ENCODE measurements at regions of chr7 and their contacts with region 1.

Region 1: GRCh38 chr7:40329601-40330153 is 194.9 kb downstream of the SUGCT start:
- DNase-seq: peak; percentile 14
- H3K4me3 Mint-ChIP-seq: no peak overlapping the region
- H3K27ac Mint-ChIP-seq: no peak overlapping the region
- H3K4me1 Mint-ChIP-seq: no peaks in the 10 kb centered on the region
- H3K27me3 Mint-ChIP-seq: no peaks in the 10 kb centered on the region
- CTCF ChIP-seq: peak; percentile 85

Region 2: GRCh38 chr7:40232242-40232893 is 97.3 kb before region 1 on chr7:
- CTCF ChIA-PET with region 1: interaction called, 5 read pairs
- intact Hi-C with region 1: loop called (anchors 5 kb)
- DNase-seq: peak; percentile 57
- H3K4me3 Mint-ChIP-seq: no peak overlapping the region
- H3K27ac Mint-ChIP-seq: no peak overlapping the region
- H3K4me1 Mint-ChIP-seq: peaks cover 9% of the 10 kb centered on the region
- H3K27me3 Mint-ChIP-seq: no peaks in the 10 kb centered on the region
- CTCF ChIP-seq: peak; percentile 62

Region 3: GRCh38 chr7:40393660-40394059 is 64.0 kb after region 1 on chr7:
- CTCF ChIA-PET with region 1: no interaction called
- intact Hi-C with region 1: no loop called
- DNase-seq: no peak
- H3K4me3 Mint-ChIP-seq: no peak overlapping the region
- H3K27ac Mint-ChIP-seq: no peak overlapping the region
- H3K4me1 Mint-ChIP-seq: no peaks in the 10 kb centered on the region
- H3K27me3 Mint-ChIP-seq: no peaks in the 10 kb centered on the region
- CTCF ChIP-seq: no peak

Region 4: DNA sequence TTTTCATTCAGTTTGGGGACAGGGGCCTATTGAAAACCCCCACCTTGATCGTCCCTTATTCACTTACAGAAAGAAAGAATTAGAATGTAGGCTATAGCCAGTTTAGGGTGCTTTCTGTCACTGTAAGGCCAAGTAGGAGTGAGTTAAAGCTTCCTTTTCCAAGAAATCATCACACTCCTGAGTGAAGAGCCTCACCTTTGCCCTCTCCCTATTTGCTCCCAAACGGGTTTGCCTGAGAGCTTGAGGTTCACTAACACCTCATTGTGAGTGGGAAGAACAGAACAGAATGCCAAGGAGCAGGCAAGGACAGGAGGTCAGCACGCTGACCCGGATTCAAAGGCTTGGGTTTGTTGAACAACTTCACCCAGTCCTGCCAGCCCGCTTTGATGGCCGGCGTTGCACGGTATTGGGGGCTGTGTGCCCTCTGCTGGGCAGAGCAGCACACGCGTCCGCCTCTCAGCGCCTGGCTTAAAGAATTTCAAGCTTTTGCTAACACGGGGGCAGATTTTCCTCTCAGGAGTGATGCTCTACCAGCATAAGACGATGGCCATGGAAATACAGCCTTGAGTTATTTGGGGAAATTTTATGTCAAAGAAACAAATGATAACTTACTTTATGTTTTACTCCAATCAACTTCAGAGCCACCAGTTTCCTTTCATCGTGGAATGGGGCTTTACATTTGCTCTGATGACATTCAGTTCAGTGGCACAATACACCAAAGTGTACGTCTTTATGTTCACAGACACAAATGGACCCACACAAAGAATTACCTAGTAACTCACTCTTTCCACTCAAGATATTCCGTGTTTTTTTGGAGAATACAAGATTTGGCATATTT is 275.1 kb after region 1 on chr7:
- CTCF ChIA-PET with region 1: interaction called, 6 read pairs
- intact Hi-C with region 1: loop called (anchors 1 kb)
- DNase-seq: peak; percentile 72
- H3K4me3 Mint-ChIP-seq: no peak overlapping the region
- H3K27ac Mint-ChIP-seq: no peak overlapping the region
- H3K4me1 Mint-ChIP-seq: peaks cover 10% of the 10 kb centered on the region
- H3K27me3 Mint-ChIP-seq: no peaks in the 10 kb centered on the region
- CTCF ChIP-seq: peak; percentile 92

Region 5: DNA sequence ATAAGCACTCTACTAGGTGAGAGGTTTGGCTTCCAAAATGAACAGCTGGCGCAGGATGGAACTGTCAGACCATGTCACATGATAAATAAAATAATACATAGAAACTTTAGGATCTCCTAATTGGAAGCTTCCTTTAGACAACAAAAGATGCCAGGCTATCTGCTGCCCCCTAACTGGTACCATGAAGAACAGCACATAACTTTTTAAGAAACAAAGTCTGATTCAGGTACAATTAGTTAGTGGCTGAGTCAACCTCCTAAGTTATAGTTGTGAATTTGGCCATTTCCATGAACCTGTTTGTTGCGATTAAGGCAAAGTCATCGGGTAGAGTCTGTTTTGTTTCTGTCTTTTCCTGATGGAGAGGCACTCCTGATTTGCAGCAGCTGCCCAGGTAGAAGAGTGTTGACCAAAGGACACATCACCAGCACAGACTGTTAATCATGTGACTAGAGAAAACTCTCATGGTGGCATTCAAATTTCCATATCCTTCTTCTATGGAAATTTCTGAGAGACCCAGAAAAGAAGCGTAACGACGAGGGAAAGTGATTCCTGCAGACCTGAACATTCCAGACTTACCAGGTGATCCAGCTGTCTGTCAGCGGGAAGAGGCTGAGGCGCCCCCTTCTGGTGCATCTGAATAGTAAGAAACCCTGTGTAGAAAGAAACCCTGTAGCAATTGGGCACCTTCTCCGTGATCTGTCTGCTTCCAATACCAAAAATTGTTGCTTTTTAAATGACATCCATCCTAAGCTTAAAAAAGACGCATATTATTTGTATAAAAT is 1381.8 kb after region 1 on chr7:
- CTCF ChIA-PET with region 1: interaction called, 3 read pairs
- intact Hi-C with region 1: loop called (anchors 1 kb)
- DNase-seq: peak; percentile 70
- H3K4me3 Mint-ChIP-seq: no peak overlapping the region
- H3K27ac Mint-ChIP-seq: no peak overlapping the region
- H3K4me1 Mint-ChIP-seq: peaks cover 22% of the 10 kb centered on the region
- H3K27me3 Mint-ChIP-seq: no peaks in the 10 kb centered on the region
- CTCF ChIP-seq: peak; percentile 86

Region 6: GRCh38 chr7:41731492-41732435 is 1402.1 kb after region 1 on chr7:
- CTCF ChIA-PET with region 1: no interaction called
- intact Hi-C with region 1: loop called (anchors 1 kb)
- DNase-seq: no peak
- H3K4me3 Mint-ChIP-seq: no peak overlapping the region
- H3K27ac Mint-ChIP-seq: no peak overlapping the region
- H3K4me1 Mint-ChIP-seq: peaks cover 8% of the 10 kb centered on the region
- H3K27me3 Mint-ChIP-seq: peaks cover 28% of the 10 kb centered on the region
- CTCF ChIP-seq: peak; percentile 57

Measured in Calu3 (cell line).